Activated CD8-positive, alpha-beta memory T cell treated with anti-CD3 and anti-CD28 coated beads, Interleukin-2, amount 10 ng/mL, durations not matched to agents 7 days and 5 days (primary cell): ENCODE measurements at regions of chr10 and their contacts with region 1.

Region 1: GRCh38 chr10:30783939-30784500 is 154.5 kb upstream of the LYZL2 start:
- DNase-seq: peak; percentile 90
- ATAC-seq: peak; percentile 84
- H3K4me3 Mint-ChIP-seq: peak overlapping the region; percentile 72
- H3K27ac Mint-ChIP-seq: peak overlapping the region; percentile 84
- H3K4me1 Mint-ChIP-seq: peaks cover 27% of the 10 kb centered on the region
- H3K27me3 Mint-ChIP-seq: peaks cover 3% of the 10 kb centered on the region

Region 2: GRCh38 chr10:30763918-30764317 is 20.1 kb before region 1 on chr10:
- CTCF ChIA-PET with region 1: interaction called, 25 read pairs
- DNase-seq: peak; percentile 55
- ATAC-seq: peak; percentile 52
- H3K4me3 Mint-ChIP-seq: no peak overlapping the region
- H3K27ac Mint-ChIP-seq: peak overlapping the region; percentile 50
- H3K4me1 Mint-ChIP-seq: peaks cover 27% of the 10 kb centered on the region
- H3K27me3 Mint-ChIP-seq: peaks cover 20% of the 10 kb centered on the region

Region 3: DNA sequence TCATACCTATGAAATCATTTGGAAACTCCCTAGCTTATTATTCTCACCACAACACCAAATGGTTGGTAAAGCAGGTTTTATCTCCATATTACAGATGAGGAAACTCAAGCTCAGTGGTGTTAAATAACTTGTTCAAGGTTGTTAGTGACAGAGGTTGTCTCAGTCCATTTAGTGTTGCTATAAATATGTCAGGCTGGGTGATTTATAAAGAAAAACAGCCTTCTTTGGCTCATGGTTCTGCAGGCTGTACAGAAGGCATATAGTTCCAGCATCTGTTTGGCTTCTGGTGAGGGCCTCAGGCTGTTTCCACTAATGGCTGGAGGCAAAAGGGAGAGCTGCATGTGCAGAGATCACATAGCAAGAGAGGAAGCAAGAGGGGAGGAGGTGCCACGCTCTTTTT is 151.1 kb after region 1 on chr10:
- CTCF ChIA-PET with region 1: no interaction called
- DNase-seq: no peak
- ATAC-seq: no peak
- H3K4me3 Mint-ChIP-seq: no peak overlapping the region
- H3K27ac Mint-ChIP-seq: no peak overlapping the region
- H3K4me1 Mint-ChIP-seq: peaks cover 6% of the 10 kb centered on the region
- H3K27me3 Mint-ChIP-seq: no peaks in the 10 kb centered on the region

Region 4: DNA sequence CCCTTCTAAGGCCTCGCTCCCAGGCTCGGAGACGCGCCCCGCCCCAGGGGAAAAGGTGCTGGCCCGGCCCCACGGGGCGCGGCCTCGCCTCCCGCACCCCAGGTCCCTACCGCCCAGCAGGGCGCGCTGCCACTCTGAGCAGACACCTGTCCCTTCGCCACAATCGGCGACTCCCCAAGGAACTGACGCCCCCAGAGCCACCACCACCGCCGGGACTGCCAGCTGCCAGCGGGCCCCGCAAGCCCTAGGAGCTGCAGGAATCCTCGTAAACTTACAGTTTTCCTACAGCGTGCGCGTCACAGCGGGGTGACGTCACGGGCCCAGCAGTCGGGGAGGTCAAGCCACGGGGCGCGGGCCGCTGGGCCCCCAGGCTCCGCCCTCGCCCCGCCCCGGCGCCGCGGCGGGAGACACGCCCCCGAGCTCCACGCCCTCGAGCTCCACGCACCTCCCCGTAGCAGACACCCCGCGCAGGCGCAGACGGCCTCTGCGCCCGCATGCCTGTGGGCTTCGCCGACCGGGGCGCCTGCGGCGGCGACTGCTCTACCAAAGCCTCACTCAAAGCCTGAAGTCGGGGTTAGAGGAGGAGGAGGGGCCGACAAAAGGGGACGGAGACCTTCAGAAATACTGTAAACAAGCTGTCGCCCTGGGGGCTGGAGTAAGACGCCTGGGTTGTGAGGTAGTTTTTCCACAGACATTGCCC is 247.7 kb after region 1 on chr10 and contains the start of gene ZNF438:
- CTCF ChIA-PET with region 1: interaction called, 14 read pairs
- DNase-seq: peak; percentile 95
- ATAC-seq: peak; percentile 89
- H3K4me3 Mint-ChIP-seq: peak within 1 kb of the TSS; percentile 81
- H3K27ac Mint-ChIP-seq: peak within 1 kb of the TSS; percentile 97
- H3K4me1 Mint-ChIP-seq: peaks cover 17% of the 10 kb centered on the region
- H3K27me3 Mint-ChIP-seq: no peaks in the 10 kb centered on the region
- total RNA-seq, gene ZNF438: 3.8 to 4.4 TPM